ENCODE measurements at regions of chr18 and their contacts with region 1.

Region 1: GRCh38 chr18:61502472-61502871 is 169.2 kb downstream of the CDH20 start:
- DNase-seq: peak; percentile 19
- H3K4me3 ChIP-seq: no peak overlapping the region
- H3K27ac ChIP-seq: no peak overlapping the region
- H3K4me1 ChIP-seq: no peaks in the 10 kb centered on the region
- CTCF ChIP-seq: peak; percentile 68

Region 2: DNA sequence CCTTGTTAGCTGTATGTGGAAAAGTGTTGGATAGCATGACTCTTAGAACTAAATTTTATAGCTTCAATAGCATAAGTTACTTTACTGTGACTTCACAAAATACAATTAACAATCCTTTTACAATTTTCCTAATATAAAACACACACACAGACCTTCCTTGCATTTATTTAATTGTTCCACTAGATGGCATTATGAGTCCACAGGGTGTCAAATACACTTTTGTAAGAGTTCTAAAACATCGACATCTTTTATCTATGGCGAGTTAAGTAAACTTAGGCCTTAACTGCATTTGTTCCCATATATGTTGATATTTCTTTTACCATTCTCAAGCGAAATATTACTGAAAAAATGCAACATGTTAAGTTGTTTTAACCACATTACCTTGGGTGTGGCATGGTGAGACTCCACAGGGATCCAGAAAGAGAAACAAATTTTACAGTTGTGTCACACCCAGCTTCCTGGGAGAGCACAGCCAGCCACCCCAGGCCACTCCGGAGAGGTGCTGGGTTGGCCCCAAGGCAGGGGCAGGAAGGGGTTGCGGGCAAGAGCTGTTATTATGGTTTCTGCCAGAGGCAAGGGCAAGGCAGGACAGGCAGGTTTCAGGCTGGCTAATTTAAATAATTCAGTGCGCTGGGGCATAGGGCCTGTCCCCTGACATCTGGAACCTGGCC is 817.5 kb before region 1 on chr18:
- CTCF ChIA-PET with region 1: no interaction called
- POLR2A ChIA-PET with region 1: no interaction called
- intact Hi-C with region 1: loop called (anchors 2 kb)
- DNase-seq: peak; percentile 3
- H3K4me3 ChIP-seq: no peak overlapping the region
- H3K27ac ChIP-seq: no peak overlapping the region
- H3K4me1 ChIP-seq: no peaks in the 10 kb centered on the region
- CTCF ChIP-seq: peak; percentile 70

Region 3: DNA sequence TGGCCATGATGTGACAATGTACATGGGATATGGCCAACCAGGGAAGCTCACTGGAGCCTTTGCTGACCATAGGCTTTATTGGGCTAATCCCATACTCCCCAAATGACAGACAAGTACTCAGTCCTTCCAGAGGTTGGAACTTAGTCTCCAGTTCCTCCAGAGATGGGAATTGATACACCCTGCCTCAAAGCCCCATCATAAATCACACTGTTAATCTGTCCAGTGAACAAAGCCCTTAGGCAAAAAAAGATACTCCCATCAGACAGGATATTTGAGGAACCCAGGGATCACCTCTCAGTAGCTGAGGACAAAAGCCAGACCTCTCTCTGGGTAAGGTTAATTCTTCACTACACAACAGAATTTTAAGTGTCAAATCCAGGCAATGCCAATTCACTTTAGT is 416.7 kb before region 1 on chr18:
- CTCF ChIA-PET with region 1: no interaction called
- POLR2A ChIA-PET with region 1: no interaction called
- intact Hi-C with region 1: loop called (anchors 10 kb)
- DNase-seq: no peak
- H3K4me3 ChIP-seq: no peak overlapping the region
- H3K27ac ChIP-seq: no peak overlapping the region
- H3K4me1 ChIP-seq: no peaks in the 10 kb centered on the region
- CTCF ChIP-seq: no peak

Region 4: GRCh38 chr18:61322265-61322873 is 180.1 kb before region 1 on chr18:
- CTCF ChIA-PET with region 1: no interaction called
- POLR2A ChIA-PET with region 1: no interaction called
- intact Hi-C with region 1: loop called (anchors 2 kb)
- DNase-seq: peak; percentile 33
- H3K4me3 ChIP-seq: no peak overlapping the region
- H3K27ac ChIP-seq: no peak overlapping the region
- H3K4me1 ChIP-seq: no peaks in the 10 kb centered on the region
- CTCF ChIP-seq: peak; percentile 78